ENCODE measurements at regions of chrX and their contacts with region 1.

Region 1: GRCh38 chrX:40153335-40154249 is 55.8 kb upstream of the BCOR start:
- DNase-seq: peak; percentile 64 to 75 (median 67)
- ATAC-seq: peak; percentile 37
- H3K4me3 ChIP-seq: peak overlapping the region; percentile 45
- H3K27ac ChIP-seq: peak overlapping the region; percentile 97
- H3K4me1 ChIP-seq: peaks cover 34 to 83% of the 10 kb centered on the region in 2 experiments
- H3K27me3 ChIP-seq: no peaks in the 10 kb centered on the region
- CTCF ChIP-seq: peak in 2 of 3 experiments; percentile 10 to 26; a peak in 2 of 6 replicates
- EP300 ChIP-seq: no peak
- POLR2A ChIP-seq: peak; percentile 55
- RAD21 ChIP-seq: no peak

Region 2: GRCh38 chrX:40097497-40098263 is 55.9 kb before region 1 on chrX and contains the start of gene BCOR:
- CTCF ChIA-PET with region 1: interaction called, 4 read pairs
- POLR2A ChIA-PET with region 1: interaction called, 13 read pairs
- in situ Hi-C with region 1: loop called (anchors 10 kb)
- intact Hi-C with region 1: no loop called
- DNase-seq: peak; percentile 58 to 89 (median 72)
- ATAC-seq: peak; percentile 27
- H3K4me3 ChIP-seq: peak within 1 kb of the TSS; percentile 70
- H3K27ac ChIP-seq: peak within 1 kb of the TSS; percentile 92
- H3K4me1 ChIP-seq: peaks cover 39 to 71% of the 10 kb centered on the region in 2 experiments
- H3K27me3 ChIP-seq: no peaks in the 10 kb centered on the region
- CTCF ChIP-seq: no peak
- EP300 ChIP-seq: no peak
- POLR2A ChIP-seq: peak; percentile 73
- RAD21 ChIP-seq: no peak; a peak in 1 of 4 replicates
- polyA plus RNA-seq, gene BCOR: 32.0 to 37.4 TPM

Region 3: GRCh38 chrX:40120838-40121682 is 32.5 kb before region 1 on chrX:
- CTCF ChIA-PET with region 1: no interaction called
- POLR2A ChIA-PET with region 1: no interaction called
- in situ Hi-C with region 1: no loop called
- intact Hi-C with region 1: no loop called
- DNase-seq: no peak
- ATAC-seq: no peak
- H3K4me3 ChIP-seq: no peak overlapping the region
- H3K27ac ChIP-seq: no peak overlapping the region
- H3K4me1 ChIP-seq: peaks cover 19 to 26% of the 10 kb centered on the region in 2 experiments; a peak in 4 of 5 replicates
- H3K27me3 ChIP-seq: no peaks in the 10 kb centered on the region
- CTCF ChIP-seq: no peak
- EP300 ChIP-seq: no peak
- POLR2A ChIP-seq: no peak
- RAD21 ChIP-seq: no peak

Region 4: GRCh38 chrX:40132751-40133150 is 20.8 kb before region 1 on chrX:
- CTCF ChIA-PET with region 1: no interaction called
- POLR2A ChIA-PET with region 1: interaction called, 3 read pairs
- in situ Hi-C with region 1: no loop called
- intact Hi-C with region 1: loop called (anchors 2 kb)
- DNase-seq: peak; percentile 76 to 85 (median 79)
- ATAC-seq: peak; percentile 92
- H3K4me3 ChIP-seq: peak overlapping the region; percentile 6; the same call in 1 of the 2 replicates
- H3K27ac ChIP-seq: peak overlapping the region; percentile 83
- H3K4me1 ChIP-seq: peaks cover 30 to 33% of the 10 kb centered on the region in 2 experiments
- H3K27me3 ChIP-seq: no peaks in the 10 kb centered on the region
- CTCF ChIP-seq: no peak
- EP300 ChIP-seq: peak; percentile 67; the same call in 1 of the 2 replicates
- POLR2A ChIP-seq: no peak
- RAD21 ChIP-seq: no peak

Region 5: GRCh38 chrX:40140706-40141499 is 12.7 kb before region 1 on chrX:
- CTCF ChIA-PET with region 1: no interaction called
- POLR2A ChIA-PET with region 1: interaction called, 19 read pairs
- in situ Hi-C with region 1: no loop called
- intact Hi-C with region 1: no loop called
- DNase-seq: no peak
- ATAC-seq: peak; percentile 60
- H3K4me3 ChIP-seq: no peak overlapping the region
- H3K27ac ChIP-seq: no peak overlapping the region
- H3K4me1 ChIP-seq: peaks cover 5 to 20% of the 10 kb centered on the region in 2 experiments; a peak in 4 of 5 replicates
- H3K27me3 ChIP-seq: no peaks in the 10 kb centered on the region
- CTCF ChIP-seq: no peak
- EP300 ChIP-seq: no peak
- POLR2A ChIP-seq: no peak
- RAD21 ChIP-seq: no peak

Region 6: GRCh38 chrX:40244980-40245379 is 91.4 kb after region 1 on chrX:
- CTCF ChIA-PET with region 1: no interaction called
- POLR2A ChIA-PET with region 1: no interaction called
- in situ Hi-C with region 1: no loop called
- intact Hi-C with region 1: no loop called
- DNase-seq: no peak
- ATAC-seq: peak; percentile 44
- H3K4me3 ChIP-seq: no peak overlapping the region
- H3K27ac ChIP-seq: no peak overlapping the region
- H3K4me1 ChIP-seq: peaks cover 3 to 44% of the 10 kb centered on the region in 2 experiments; a peak in 4 of 5 replicates
- H3K27me3 ChIP-seq: no peaks in the 10 kb centered on the region
- CTCF ChIP-seq: no peak
- EP300 ChIP-seq: no peak
- POLR2A ChIP-seq: no peak
- RAD21 ChIP-seq: no peak

Region 7: GRCh38 chrX:40326186-40326965 is 172.8 kb after region 1 on chrX:
- CTCF ChIA-PET with region 1: no interaction called
- POLR2A ChIA-PET with region 1: no interaction called
- in situ Hi-C with region 1: no loop called
- intact Hi-C with region 1: no loop called
- DNase-seq: no peak
- ATAC-seq: no peak
- H3K4me3 ChIP-seq: no peak overlapping the region
- H3K27ac ChIP-seq: no peak overlapping the region
- H3K4me1 ChIP-seq: no peaks in the 10 kb centered on the region
- H3K27me3 ChIP-seq: peaks cover 0 to 4% of the 10 kb centered on the region in 2 experiments; a peak in 1 of 5 replicates
- CTCF ChIP-seq: no peak
- EP300 ChIP-seq: no peak
- POLR2A ChIP-seq: no peak
- RAD21 ChIP-seq: no peak

Measured in K562 (cell line).